ENCODE measurements at regions of chr3 and their contacts with region 1.

Region 1: GRCh38 chr3:138186803-138187295 is 252 bp upstream of the ARMC8 start:
- DNase-seq: peak in 9 of 10 donors; percentile 83 to 93 (median 87)
- ATAC-seq: peak; percentile 91
- H3K4me3 Mint-ChIP-seq: peak overlapping the region; percentile 93 to 98 (median 96)
- H3K27ac Mint-ChIP-seq: peak overlapping the region; percentile 94 to 100 (median 96)
- H3K4me1 Mint-ChIP-seq: peaks cover 20 to 46% (median 45%) of the 10 kb centered on the region in 4 donors
- H3K27me3 Mint-ChIP-seq: peaks cover 0 to 12% (median 2%) of the 10 kb centered on the region in 5 donors

Region 2: DNA sequence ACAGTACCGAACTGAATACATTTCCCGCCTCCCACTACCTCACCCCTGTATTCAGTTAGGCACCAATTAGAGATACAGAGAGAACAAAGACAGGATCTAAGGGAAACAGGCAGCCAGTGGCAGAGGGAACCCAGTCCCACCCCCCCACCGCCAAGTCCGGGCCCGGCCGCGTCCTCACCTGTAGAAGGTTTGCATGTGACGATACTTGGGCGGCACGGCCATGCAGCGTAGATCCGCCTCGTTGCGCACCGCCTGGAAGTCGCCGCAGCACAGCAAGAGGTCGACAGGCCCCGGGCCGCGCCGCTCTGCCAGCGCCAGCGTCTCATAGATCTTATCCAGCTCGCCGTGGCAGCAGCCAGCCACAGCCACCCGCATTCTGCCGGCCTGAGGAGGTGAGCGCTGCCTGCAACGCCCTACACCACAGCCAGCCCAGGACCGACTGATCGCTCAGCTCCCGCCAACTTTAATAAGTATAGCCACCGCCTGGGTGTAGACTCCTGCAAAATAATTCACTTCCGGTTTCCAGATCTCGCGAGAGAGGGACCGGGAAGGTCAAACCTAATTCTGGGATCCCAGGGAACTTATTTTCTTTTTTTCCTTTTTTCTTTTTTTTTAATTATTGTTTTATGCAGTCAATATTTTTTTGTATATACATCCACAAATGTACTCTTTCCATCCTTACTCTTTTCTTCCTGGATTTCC is 12.3 kb before region 1 on chr3 and contains the start of gene DBR1:
- POLR2A ChIA-PET with region 1: interaction called, 53 read pairs
- DNase-seq: peak; percentile 56 to 89 (median 77)
- ATAC-seq: peak; percentile 87 to 91
- H3K4me3 Mint-ChIP-seq: peak within 1 kb of the TSS; percentile 92 to 100 (median 98)
- H3K27ac Mint-ChIP-seq: peak within 1 kb of the TSS; percentile 95 to 99 (median 98)
- H3K4me1 Mint-ChIP-seq: peaks cover 10 to 45% (median 37%) of the 10 kb centered on the region in 4 donors
- H3K27me3 Mint-ChIP-seq: no peaks in the 10 kb centered on the region
- polyA plus RNA-seq, gene DBR1: 9.9 to 13.7 (median 10.0) TPM